Aorta (tissue), 5 donors: ENCODE measurements at regions of chr14 and their contacts with region 1.

Region 1: DNA sequence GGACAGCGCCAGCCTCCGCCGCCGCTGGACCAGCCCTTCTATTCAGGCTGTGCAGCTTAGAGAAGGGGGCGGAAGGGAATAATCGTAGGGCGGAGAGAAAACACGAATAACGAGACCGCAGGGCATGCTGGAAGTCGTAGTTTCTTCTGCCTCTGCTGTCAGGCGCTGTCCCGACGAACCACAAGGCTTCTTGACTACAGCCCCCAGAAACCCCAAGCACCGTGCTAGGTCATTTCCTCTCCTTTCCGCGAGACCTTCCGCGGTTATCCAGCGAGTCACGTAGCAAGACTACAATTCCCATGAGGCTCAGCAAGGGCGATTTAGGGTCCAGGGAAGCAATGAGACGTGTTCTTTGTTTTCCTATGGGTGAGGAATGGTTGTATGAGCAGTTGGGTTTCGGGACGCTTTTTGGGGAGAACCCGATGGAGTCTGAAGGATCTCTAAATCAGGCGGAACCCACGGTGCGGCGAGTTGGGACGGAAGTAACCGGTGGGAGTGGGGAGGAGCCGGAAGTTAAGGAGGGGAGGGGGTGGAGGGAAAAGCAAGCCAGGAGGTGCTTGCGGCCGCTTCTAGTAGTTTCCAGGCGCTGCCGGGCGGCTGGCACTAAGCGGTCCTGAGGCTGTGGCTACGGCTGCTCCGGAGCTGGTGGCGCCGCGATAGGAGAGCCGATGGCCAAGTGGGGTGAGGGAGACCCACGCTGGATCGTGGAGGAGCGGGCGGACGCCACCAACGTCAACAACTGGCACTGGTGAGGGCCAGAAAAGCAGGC is at the starts of genes AHSA1 and VIPAS39:
- DNase-seq: peak; percentile 95 to 98
- ATAC-seq: peak; percentile 99
- H3K4me3 ChIP-seq: peak within 1 kb of the TSS; percentile 79 to 89
- H3K27ac ChIP-seq: peak within 1 kb of the TSS in 1 of 2 donors; percentile 66
- H3K4me1 ChIP-seq: no peaks in the 10 kb centered on the region
- H3K27me3 ChIP-seq: no peaks in the 10 kb centered on the region
- total RNA-seq, gene AHSA1: 66.5 to 110 TPM
- total RNA-seq, gene VIPAS39: 13.4 to 17.0 TPM

Region 2: DNA sequence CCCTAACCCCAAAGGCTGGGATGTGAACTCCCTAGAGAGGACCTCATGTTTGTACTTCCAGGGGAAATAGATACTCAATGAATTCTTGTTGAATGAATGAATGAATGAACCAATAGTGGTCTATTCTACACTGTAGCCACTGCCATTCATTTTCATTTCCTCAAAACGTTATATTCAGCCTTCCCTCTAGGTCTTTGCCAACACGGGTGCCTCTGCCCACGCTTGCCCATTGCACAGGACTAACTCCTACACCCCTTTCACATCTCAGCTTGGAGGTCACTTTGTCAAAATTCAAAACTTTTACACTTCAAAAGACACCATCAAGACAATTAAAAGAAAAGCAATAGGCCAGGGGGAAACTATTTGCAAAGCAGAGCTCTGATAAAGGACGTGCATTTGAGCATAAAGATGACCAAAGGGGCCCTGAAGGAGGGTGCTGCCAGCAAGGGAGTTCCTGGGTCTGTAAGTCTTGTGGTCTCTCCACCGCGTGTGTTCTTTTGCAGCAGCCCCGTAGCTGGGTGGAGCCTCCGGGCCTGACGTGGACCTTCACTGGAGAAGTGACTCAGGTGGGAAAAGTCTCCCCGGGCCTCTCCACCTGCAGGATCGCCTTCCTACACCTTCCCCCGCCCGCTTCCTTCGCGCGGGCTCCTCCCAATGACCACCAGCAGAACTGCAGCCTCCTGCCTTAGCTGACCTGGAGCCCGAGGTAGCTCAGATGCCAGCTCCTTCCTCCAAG is 244.6 kb before region 1 on chr14:
- intact Hi-C with region 1: no loop called
- DNase-seq: no peak
- ATAC-seq: no peak
- H3K4me3 ChIP-seq: no peak overlapping the region
- H3K27ac ChIP-seq: no peak overlapping the region
- H3K4me1 ChIP-seq: no peaks in the 10 kb centered on the region
- H3K27me3 ChIP-seq: no peaks in the 10 kb centered on the region

Region 3: DNA sequence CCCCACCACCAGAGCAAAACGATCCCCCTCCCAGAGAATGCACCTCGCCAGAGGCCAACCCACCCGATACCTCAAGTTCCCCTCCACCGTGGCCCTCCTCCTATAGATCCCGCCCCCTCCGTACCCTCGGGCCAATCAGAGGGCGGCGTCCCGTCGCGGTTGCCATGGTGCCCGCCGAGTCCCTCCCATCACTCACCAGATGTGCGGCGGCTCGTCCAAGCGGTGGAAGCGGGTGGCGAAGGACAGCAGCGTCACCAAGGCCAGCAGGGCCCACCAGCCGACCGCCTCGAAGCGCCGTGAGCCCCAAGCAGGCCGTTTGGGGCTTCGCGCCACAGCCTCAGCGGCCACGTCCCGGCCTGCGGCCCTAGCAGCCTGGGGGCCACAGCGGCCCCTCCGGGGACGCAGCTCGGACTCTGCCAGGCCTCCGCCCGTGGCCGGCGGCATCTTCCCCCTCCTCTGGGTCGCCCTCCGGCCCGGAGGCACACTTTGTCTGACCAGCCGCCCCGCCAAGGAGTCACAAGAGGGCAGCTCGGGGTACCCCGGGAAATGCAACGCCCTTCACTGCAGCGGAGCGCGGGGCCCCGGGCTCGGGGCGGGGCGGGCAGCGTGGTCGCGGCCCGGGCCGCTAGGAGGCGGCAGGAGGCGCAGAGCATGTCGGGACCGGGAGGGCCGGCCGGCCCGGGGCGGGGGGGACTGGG is 137.3 kb before region 1 on chr14 and contains the start of gene POMT2:
- intact Hi-C with region 1: loop called (anchors 5 kb)
- DNase-seq: peak; percentile 96 to 97
- ATAC-seq: peak; percentile 90
- H3K4me3 ChIP-seq: peak within 1 kb of the TSS; percentile 87 to 93
- H3K27ac ChIP-seq: peak within 1 kb of the TSS; percentile 49 to 94
- H3K4me1 ChIP-seq: no peaks in the 10 kb centered on the region
- H3K27me3 ChIP-seq: no peaks in the 10 kb centered on the region
- total RNA-seq, gene POMT2: 15.6 to 23.4 TPM

Region 4: GRCh38 chr14:77529963-77530362 is 72.3 kb after region 1 on chr14:
- intact Hi-C with region 1: no loop called
- DNase-seq: no peak
- ATAC-seq: no peak
- H3K4me3 ChIP-seq: no peak overlapping the region
- H3K27ac ChIP-seq: no peak overlapping the region
- H3K4me1 ChIP-seq: no peaks in the 10 kb centered on the region
- H3K27me3 ChIP-seq: no peaks in the 10 kb centered on the region

Region 5: DNA sequence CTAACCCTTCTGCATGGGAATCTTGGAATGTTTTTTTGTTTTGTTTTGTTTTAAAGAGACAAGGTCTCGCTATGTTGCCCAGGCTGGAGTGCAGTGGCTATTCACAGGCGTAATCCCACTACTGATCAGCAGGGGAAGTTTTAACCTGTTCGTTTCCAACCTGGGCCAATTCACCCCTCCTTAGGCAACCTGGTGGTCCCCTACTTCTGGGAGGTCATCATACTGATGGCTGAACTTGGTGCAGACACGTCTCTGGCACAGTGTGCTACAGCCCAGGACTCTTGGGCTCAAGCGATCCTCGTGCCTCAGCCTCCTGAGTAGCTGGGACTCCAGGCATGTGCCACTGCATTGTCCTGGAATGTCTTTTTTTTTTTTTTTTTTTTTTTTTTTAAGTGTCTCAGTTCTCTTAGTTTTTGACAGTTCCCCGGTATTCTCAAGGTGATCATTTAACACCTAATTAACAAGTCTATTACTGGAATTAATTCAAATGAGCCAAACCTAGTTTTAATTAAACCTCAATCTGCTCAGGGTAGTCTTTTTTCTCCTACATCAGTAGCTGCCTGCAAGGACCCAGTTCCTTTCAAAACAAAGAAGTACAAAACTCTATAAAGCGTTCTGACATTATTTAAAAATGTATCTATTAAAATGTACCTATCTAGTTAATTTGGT is 89.9 kb after region 1 on chr14:
- intact Hi-C with region 1: loop called (anchors 2 to 5 kb)
- DNase-seq: no peak
- ATAC-seq: no peak
- H3K4me3 ChIP-seq: no peak overlapping the region
- H3K27ac ChIP-seq: no peak overlapping the region
- H3K4me1 ChIP-seq: peaks cover 3% of the 10 kb centered on the region in 2 donors
- H3K27me3 ChIP-seq: no peaks in the 10 kb centered on the region

Region 6: DNA sequence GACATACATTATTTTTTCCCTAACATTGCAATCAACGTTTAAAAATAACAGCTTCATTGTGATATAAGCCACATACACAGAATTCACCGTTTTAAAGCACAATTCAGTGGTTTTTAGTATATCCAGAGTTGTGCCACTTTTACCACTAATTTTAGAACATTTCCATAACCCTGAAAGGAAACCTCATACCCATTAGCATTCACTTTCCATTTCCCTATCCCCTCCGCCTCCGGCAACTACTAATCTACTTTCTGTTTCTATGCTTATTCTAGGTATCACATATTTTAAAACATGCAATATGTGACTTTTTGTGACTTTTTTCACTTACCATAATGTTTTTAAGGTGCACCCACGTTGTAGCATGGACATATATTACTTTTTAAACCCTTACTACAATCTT is 96.5 kb after region 1 on chr14:
- intact Hi-C with region 1: loop called (anchors 2 to 5 kb)
- DNase-seq: no peak
- ATAC-seq: no peak
- H3K4me3 ChIP-seq: no peak overlapping the region
- H3K27ac ChIP-seq: no peak overlapping the region
- H3K4me1 ChIP-seq: no peaks in the 10 kb centered on the region
- H3K27me3 ChIP-seq: no peaks in the 10 kb centered on the region

Region 7: GRCh38 chr14:77616454-77617229 is 158.9 kb after region 1 on chr14 and contains the start of gene SPTLC2:
- intact Hi-C with region 1: loop called (anchors 2 to 10 kb)
- DNase-seq: peak; percentile 99
- ATAC-seq: peak; percentile 98
- H3K4me3 ChIP-seq: peak within 1 kb of the TSS; percentile 93 to 95
- H3K27ac ChIP-seq: peak within 1 kb of the TSS in 1 of 2 donors; percentile 66
- H3K4me1 ChIP-seq: peaks cover 0 to 2% of the 10 kb centered on the region in 2 donors
- H3K27me3 ChIP-seq: no peaks in the 10 kb centered on the region
- total RNA-seq, gene SPTLC2: 37.8 to 45.4 TPM

Region 8: DNA sequence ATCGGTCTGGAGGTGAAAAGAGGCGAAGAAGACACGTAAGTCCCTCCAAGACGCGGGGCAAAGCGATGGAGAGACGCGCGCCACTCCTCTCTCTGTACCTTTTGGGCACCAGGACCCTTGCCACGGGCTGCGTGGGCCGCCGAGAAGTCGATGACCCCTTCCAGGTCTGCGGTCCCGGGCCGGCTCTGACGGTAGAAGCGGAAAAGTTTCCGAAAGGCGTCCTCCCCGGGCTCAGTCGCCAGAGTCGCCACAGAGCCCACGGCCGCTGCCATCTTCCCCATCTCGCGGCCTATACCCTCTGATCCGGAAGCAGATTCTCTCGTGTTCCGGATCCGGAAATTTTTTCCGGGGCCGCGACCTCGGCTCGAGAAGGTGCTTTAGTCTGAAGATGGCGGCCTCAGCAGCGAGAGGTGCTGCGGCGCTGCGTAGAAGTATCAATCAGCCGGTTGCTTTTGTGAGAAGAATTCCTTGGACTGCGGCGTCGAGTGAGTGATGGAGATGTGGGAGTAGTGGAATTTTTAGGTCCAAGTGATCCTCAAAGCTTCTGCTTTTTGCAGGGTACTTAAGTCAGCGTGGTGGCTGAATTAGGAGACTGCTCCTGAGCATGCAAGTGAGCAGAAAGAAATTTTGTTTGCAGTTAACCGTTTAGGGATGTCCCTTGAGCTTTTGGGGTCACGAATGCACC is 250.2 kb after region 1 on chr14 and contains the starts of genes ALKBH1 and SLIRP:
- intact Hi-C with region 1: loop called (anchors 1 to 5 kb)
- DNase-seq: peak; percentile 92 to 95
- ATAC-seq: peak; percentile 96
- H3K4me3 ChIP-seq: peak within 1 kb of the TSS; percentile 95 to 99
- H3K27ac ChIP-seq: peak within 1 kb of the TSS in 1 of 2 donors; percentile 67
- H3K4me1 ChIP-seq: peaks cover 4 to 15% of the 10 kb centered on the region in 2 donors
- H3K27me3 ChIP-seq: no peaks in the 10 kb centered on the region
- total RNA-seq, gene ALKBH1: 7.4 to 12.6 TPM
- total RNA-seq, gene SLIRP: 57.3 to 84.4 TPM